Endothelial cell of umbilical vein (primary cell): ENCODE measurements at regions of chr6 and their contacts with region 1.

Region 1: DNA sequence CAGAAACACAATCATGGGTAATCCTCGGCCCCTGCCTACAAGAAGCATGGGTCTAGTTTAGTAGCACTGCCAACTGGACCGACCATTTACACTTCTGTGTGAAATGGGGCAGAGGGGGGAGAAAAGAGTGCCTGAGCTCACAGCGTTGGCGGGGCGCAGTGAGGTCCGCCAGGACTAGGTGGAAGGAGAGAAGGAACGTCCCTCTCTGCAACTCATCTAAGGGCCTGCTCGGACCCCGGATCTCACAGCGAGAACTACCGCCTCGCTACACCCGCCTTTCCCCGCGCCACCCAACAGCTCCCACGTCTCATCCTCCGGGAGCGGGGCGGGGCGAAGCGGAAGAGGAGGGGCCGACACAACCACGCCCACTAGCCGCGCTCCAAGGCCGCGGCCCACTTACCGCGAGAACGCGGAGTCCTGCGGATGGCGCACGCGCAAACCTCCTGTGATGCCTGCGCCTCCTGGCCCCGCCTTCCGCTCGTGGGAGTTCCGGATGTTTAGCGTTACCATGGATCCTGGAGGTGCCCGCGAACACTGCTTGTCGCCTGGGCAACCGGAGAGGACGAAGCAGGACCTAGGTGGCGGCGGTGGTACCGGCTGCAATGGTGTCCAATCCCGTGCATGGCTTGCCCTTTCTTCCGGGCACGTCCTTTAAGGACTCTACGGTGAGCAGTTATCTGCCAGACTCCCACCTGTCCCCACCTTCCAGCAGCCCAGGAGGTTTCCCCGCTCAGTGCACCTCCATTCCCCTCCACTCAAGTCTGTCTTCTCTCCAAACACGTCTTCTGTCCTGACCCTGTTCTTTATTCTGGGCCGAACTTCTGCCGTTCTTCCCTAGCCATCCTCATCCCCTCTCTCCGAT is at the start of gene EFHC1:
- DNase-seq: peak; percentile 98
- H3K4me3 ChIP-seq: peak within 1 kb of the TSS; percentile 29 to 73 (median 72)
- H3K27ac ChIP-seq: peak within 1 kb of the TSS; percentile 84
- H3K4me1 ChIP-seq: peaks cover 75% of the 10 kb centered on the region
- H3K27me3 ChIP-seq: no peaks in the 10 kb centered on the region
- CTCF ChIP-seq: no peak
- POLR2A ChIP-seq: peak; percentile 96
- total RNA-seq, gene EFHC1: 14.6 and 21.1 TPM in 2 replicates

Region 2: DNA sequence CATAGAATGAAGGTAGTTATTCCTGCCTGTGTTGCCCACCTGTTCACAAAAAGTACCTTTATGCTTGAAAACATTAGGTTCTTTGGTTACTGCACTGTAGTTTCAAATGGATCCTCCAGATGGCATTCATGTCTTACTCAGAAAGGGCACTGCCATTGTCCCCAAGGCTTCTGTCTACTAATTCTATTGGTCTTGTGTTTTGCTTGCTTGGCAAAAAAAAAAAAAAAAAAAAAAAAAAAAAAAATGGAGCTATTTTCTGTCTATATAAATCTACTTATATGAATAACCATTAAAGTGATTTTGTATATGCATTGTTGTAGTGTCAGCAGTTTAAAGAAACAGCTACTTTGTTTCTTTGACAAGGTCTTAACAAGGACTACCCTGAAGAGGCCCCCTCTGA is 12.6 kb before region 1 on chr6:
- CTCF ChIA-PET with region 1: interaction called, 22 read pairs
- POLR2A ChIA-PET with region 1: no interaction called
- dilution Hi-C with region 1: no loop called
- intact Hi-C with region 1: no loop called
- DNase-seq: peak; percentile 71
- H3K4me3 ChIP-seq: no peak overlapping the region
- H3K27ac ChIP-seq: no peak overlapping the region
- H3K4me1 ChIP-seq: no peaks in the 10 kb centered on the region
- H3K27me3 ChIP-seq: no peaks in the 10 kb centered on the region
- CTCF ChIP-seq: peak; percentile 45 to 58
- POLR2A ChIP-seq: no peak

Region 3: GRCh38 chr6:52503848-52504781 is 84.1 kb after region 1 on chr6:
- CTCF ChIA-PET with region 1: interaction called, 5 read pairs
- POLR2A ChIA-PET with region 1: interaction called, 3 read pairs
- dilution Hi-C with region 1: no loop called
- intact Hi-C with region 1: loop called (anchors 1 kb)
- DNase-seq: peak; percentile 49
- H3K4me3 ChIP-seq: no peak overlapping the region
- H3K27ac ChIP-seq: peak overlapping the region; percentile 79
- H3K4me1 ChIP-seq: peaks cover 27% of the 10 kb centered on the region
- H3K27me3 ChIP-seq: no peaks in the 10 kb centered on the region
- CTCF ChIP-seq: no peak
- POLR2A ChIP-seq: no peak

Region 4: GRCh38 chr6:52537001-52537753 is 117.1 kb after region 1 on chr6:
- CTCF ChIA-PET with region 1: interaction called, 3 read pairs
- POLR2A ChIA-PET with region 1: no interaction called
- dilution Hi-C with region 1: loop called (anchors 25 kb)
- intact Hi-C with region 1: no loop called
- DNase-seq: peak; percentile 78
- H3K4me3 ChIP-seq: no peak overlapping the region
- H3K27ac ChIP-seq: peak overlapping the region; percentile 74
- H3K4me1 ChIP-seq: peaks cover 83% of the 10 kb centered on the region
- H3K27me3 ChIP-seq: no peaks in the 10 kb centered on the region
- CTCF ChIP-seq: no peak
- POLR2A ChIP-seq: peak; percentile 9

Region 5: DNA sequence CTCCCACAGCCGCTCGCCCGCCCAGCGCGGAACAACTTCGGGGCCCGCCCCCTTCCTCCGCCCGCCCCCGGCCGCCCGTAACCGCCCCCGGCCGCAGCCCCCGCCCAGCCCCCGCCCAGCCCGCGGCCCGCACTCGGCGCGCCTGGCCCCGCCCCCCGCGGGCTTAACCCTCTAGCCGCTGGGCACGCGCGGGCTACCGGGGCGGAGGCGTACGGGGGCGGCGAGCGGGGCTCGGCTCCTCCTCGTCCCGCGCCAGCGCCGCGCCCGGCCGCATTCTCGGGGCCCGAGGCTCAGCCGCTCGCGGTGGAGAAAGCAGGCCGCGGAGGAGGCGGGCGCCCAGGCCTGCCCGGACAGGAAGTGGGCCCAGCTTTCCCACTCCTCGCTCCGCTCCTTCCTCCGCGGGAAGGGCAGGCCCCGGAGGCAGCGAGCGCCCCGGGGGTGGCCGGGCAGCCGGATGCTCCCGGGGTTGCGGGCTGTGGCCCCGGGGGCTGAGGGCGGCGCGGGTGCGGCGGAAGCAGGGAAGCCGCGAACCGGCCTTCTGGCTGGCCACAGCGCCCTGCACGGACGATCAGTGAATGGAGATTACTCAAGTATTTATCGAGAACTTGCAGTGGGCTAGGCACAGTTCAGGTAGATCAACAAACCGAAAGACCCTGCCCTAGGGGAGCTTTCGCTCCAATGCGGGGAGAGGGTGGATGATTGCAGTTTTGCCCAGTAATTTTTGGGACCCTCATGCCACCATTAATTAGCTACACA is 157.2 kb after region 1 on chr6 and contains the start of gene TRAM2:
- CTCF ChIA-PET with region 1: interaction called, 15 read pairs
- POLR2A ChIA-PET with region 1: no interaction called
- dilution Hi-C with region 1: no loop called
- intact Hi-C with region 1: loop called (anchors 1 kb)
- DNase-seq: peak; percentile 75
- H3K4me3 ChIP-seq: peak within 1 kb of the TSS; percentile 65 to 85 (median 67)
- H3K27ac ChIP-seq: peak within 1 kb of the TSS; percentile 67
- H3K4me1 ChIP-seq: peaks cover 38% of the 10 kb centered on the region
- H3K27me3 ChIP-seq: no peaks in the 10 kb centered on the region
- CTCF ChIP-seq: no peak
- POLR2A ChIP-seq: peak; percentile 76
- total RNA-seq, gene TRAM2: 85.9 and 98.6 TPM in 2 replicates

Region 6: GRCh38 chr6:52664186-52664990 is 244.3 kb after region 1 on chr6:
- CTCF ChIA-PET with region 1: interaction called, 55 read pairs
- POLR2A ChIA-PET with region 1: no interaction called
- dilution Hi-C with region 1: no loop called
- intact Hi-C with region 1: loop called (anchors 1 kb)
- DNase-seq: peak; percentile 95
- H3K4me3 ChIP-seq: peak overlapping the region; percentile 46 to 92 (median 54)
- H3K27ac ChIP-seq: peak overlapping the region; percentile 39
- H3K4me1 ChIP-seq: peaks cover 15% of the 10 kb centered on the region
- H3K27me3 ChIP-seq: no peaks in the 10 kb centered on the region
- CTCF ChIP-seq: no peak
- POLR2A ChIP-seq: peak; percentile 96